ENCODE measurements at regions of chr7 and their contacts with region 1.

Region 1: DNA sequence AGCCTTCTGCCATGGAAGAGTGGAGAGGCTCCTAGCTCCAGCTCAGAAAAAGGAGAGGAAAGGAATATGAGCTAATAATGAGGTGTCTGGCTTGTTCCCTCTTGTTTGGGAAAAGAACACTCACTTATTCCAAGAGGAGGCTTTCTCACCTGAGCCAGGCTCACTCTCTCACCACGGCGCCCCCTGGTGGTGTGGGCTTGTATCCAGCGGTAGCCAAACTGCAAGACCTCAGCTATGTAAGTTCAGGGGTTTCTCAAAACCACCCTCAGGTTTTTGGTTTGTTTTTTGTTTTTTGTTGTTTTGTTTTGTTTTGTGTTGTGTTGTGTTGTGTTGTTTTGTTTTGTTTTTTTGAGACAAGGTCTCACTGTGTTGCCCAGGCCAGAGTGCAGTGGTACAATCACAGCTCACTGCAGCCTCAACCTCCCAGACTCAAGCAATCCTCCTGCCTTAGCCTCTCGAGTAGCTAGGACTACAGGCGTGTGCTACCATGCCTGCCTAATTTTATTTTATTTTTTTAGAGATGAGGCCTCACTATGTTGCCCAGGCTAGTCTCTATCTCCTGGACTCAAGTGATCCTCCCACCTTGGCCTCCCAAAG is 124.0 kb downstream of the TMEM130 start:
- DNase-seq: peak; percentile 39
- H3K4me3 ChIP-seq: no peak overlapping the region
- H3K27ac ChIP-seq: no peak overlapping the region
- H3K4me1 ChIP-seq: no peaks in the 10 kb centered on the region
- H3K27me3 ChIP-seq: no peaks in the 10 kb centered on the region
- CTCF ChIP-seq: peak; percentile 68 to 89
- POLR2A ChIP-seq: no peak

Region 2: DNA sequence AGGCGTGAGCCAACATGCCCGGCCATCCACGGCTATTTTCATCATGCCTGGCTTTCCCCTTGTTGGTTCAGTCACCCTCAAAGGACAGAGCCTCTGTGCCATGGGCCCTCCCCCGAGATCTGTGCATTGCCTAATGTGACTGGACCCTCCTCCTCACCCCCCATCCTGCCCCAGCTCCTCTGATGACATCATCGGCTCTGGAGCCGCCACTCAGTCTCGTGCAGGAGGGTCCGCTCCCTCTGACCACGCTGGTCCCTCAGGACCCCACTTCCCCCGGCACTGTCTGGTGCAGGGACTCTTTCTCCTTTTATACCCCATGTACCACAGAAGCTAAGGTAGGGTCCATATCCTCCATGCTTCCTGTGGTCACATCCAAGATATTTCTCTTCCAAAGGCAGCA is 311.7 kb before region 1 on chr7:
- CTCF ChIA-PET with region 1: interaction called, 65 read pairs
- POLR2A ChIA-PET with region 1: no interaction called
- dilution Hi-C with region 1: no loop called
- intact Hi-C with region 1: loop called (anchors 1 kb)
- DNase-seq: no peak
- H3K4me3 ChIP-seq: no peak overlapping the region
- H3K27ac ChIP-seq: no peak overlapping the region
- H3K4me1 ChIP-seq: no peaks in the 10 kb centered on the region
- H3K27me3 ChIP-seq: no peaks in the 10 kb centered on the region
- CTCF ChIP-seq: no peak
- POLR2A ChIP-seq: no peak

Region 3: DNA sequence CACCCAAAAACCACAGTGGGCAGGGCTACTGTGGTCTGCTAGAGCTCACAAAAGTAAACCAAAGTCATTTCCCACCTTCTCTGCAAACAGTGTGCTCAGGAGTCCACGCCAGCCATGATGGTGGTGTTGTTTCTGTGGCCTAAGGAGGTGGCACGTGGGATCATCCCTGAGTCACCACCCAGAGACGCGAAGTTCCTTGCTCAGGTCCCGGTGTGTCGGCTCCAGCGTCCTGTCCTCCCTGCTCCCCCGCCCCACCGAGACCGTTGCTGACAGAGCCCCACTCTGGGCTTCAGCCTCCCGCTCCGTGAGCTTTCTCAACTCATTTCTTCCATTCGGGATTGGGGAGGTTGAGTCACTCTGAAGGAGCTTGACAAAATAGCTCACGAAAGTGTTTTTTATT is 10.0 kb before region 1 on chr7:
- CTCF ChIA-PET with region 1: interaction called, 11 read pairs
- POLR2A ChIA-PET with region 1: no interaction called
- dilution Hi-C with region 1: no loop called
- intact Hi-C with region 1: no loop called
- DNase-seq: no peak
- H3K4me3 ChIP-seq: no peak overlapping the region
- H3K27ac ChIP-seq: no peak overlapping the region
- H3K4me1 ChIP-seq: no peaks in the 10 kb centered on the region
- H3K27me3 ChIP-seq: no peaks in the 10 kb centered on the region
- CTCF ChIP-seq: no peak
- POLR2A ChIP-seq: no peak

Region 4: GRCh38 chr7:98763441-98763840 is 17.6 kb after region 1 on chr7:
- CTCF ChIA-PET with region 1: interaction called, 16 read pairs
- POLR2A ChIA-PET with region 1: no interaction called
- dilution Hi-C with region 1: no loop called
- intact Hi-C with region 1: no loop called
- DNase-seq: no peak
- H3K4me3 ChIP-seq: no peak overlapping the region
- H3K27ac ChIP-seq: no peak overlapping the region
- H3K4me1 ChIP-seq: no peaks in the 10 kb centered on the region
- H3K27me3 ChIP-seq: no peaks in the 10 kb centered on the region
- CTCF ChIP-seq: no peak
- POLR2A ChIP-seq: no peak

Region 5: DNA sequence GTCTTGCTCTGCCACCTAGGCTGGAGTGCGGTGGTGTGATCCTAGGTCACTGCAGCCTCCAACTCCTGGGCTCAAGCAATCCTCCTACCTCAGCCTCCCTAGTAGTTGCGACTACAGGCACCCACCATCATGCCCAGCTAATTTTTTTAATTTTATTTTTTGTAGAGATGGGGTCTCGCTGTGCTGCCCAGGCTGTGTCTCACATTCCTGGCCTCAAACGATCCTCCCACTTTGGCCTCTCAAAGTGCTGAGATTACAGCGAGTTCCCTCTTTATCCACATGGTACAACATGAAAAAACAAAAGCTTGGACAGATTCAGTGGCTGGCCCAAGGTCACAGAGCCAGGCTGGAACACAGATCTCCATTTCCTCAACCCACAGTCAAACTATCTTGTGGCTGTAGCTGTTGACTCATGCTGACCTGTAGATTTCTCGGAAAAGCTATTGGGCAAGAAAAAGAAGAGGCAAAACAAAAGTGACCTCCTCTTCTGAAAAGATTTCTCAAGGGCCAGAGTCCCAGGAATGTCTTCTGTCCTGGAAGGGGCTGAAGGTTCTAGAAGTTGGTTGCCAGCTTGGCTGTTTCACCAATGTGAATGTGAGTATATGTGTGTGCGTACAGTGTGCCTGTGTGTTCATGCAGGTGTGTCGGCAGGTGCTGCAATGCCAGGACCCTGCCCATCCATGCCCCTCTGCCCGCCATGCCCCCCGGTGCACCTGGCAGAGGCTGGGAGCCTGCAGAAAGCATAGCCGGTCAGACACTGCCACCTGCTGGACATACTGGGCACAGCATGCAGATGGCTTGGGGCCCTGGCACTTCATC is 95.6 kb after region 1 on chr7:
- CTCF ChIA-PET with region 1: interaction called, 15 read pairs
- POLR2A ChIA-PET with region 1: no interaction called
- dilution Hi-C with region 1: no loop called
- intact Hi-C with region 1: loop called (anchors 10 kb)
- DNase-seq: peak; percentile 56
- H3K4me3 ChIP-seq: no peak overlapping the region
- H3K27ac ChIP-seq: no peak overlapping the region
- H3K4me1 ChIP-seq: no peaks in the 10 kb centered on the region
- H3K27me3 ChIP-seq: no peaks in the 10 kb centered on the region
- CTCF ChIP-seq: peak; percentile 93 to 99
- POLR2A ChIP-seq: no peak